ENCODE measurements at regions of chr21 and their contacts with region 1.

Region 1: GRCh38 chr21:26842976-26843932 is 2.0 kb downstream of the ADAMTS1 start:
- DNase-seq: peak; percentile 94
- H3K4me3 ChIP-seq: peak overlapping the region; percentile 38 to 77 (median 64)
- H3K27ac ChIP-seq: peak overlapping the region; percentile 80
- H3K4me1 ChIP-seq: peaks cover 35% of the 10 kb centered on the region
- H3K27me3 ChIP-seq: peaks cover 5 to 16% of the 10 kb centered on the region in 2 experiments
- CTCF ChIP-seq: peak; percentile 12 to 34
- POLR2A ChIP-seq: no peak

Region 2: DNA sequence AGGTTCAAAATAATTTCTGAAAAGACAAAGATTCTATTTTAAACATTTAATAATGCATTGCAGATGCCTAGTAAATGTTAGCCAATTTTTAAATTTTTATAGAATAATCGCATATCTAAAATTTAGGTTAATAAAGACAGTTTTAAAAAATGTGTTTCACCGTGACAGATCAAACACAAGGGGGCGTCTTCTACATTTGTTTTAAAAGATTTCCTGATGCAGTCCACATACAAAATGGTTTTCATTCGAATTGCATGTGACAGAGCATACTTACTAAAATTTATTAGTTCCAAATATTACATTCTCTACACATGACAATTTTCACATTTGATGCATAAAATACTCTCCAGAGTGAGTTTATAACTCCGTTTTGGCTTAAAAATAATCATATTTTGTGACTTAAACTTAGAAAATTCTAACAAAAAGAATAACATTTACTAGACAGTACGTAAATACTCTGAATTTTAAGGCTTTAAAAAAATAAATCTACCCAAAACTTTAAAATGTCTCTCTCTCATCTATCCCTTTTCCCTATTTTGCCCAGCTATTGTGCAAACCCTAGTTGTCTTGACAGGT is 73.6 kb before region 1 on chr21:
- CTCF ChIA-PET with region 1: interaction called, 3 read pairs
- POLR2A ChIA-PET with region 1: no interaction called
- dilution Hi-C with region 1: no loop called
- intact Hi-C with region 1: loop called (anchors 2 kb)
- DNase-seq: peak; percentile 43
- H3K4me3 ChIP-seq: no peak overlapping the region
- H3K27ac ChIP-seq: no peak overlapping the region
- H3K4me1 ChIP-seq: no peaks in the 10 kb centered on the region
- H3K27me3 ChIP-seq: peaks cover 0 to 2% of the 10 kb centered on the region in 2 experiments
- CTCF ChIP-seq: peak; percentile 24 to 42
- POLR2A ChIP-seq: no peak

Region 3: DNA sequence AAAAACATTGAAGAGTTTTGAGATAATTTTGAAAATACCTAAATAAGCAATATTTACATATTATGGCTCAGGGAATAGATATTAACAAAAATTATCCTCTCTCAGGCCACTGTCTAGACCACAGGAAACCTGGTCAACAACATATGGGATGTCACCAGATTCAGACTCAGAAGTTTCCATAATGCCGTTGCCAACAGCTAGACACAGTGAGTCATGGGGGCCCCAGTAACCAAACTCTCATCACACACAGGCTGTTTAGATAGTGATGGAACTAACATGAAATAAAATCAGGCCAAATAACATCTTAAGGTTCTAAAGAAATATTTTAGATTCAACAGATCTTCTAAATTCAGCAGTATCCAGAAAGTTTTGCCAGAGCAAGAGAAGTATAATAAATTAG is 805.3 kb after region 1 on chr21:
- CTCF ChIA-PET with region 1: no interaction called
- POLR2A ChIA-PET with region 1: no interaction called
- dilution Hi-C with region 1: no loop called
- intact Hi-C with region 1: loop called (anchors 1 kb)
- DNase-seq: peak; percentile 91
- H3K4me3 ChIP-seq: no peak overlapping the region
- H3K27ac ChIP-seq: peak overlapping the region; percentile 91
- H3K4me1 ChIP-seq: peaks cover 34% of the 10 kb centered on the region
- H3K27me3 ChIP-seq: no peaks in the 10 kb centered on the region
- CTCF ChIP-seq: no peak
- POLR2A ChIP-seq: no peak

Region 4: DNA sequence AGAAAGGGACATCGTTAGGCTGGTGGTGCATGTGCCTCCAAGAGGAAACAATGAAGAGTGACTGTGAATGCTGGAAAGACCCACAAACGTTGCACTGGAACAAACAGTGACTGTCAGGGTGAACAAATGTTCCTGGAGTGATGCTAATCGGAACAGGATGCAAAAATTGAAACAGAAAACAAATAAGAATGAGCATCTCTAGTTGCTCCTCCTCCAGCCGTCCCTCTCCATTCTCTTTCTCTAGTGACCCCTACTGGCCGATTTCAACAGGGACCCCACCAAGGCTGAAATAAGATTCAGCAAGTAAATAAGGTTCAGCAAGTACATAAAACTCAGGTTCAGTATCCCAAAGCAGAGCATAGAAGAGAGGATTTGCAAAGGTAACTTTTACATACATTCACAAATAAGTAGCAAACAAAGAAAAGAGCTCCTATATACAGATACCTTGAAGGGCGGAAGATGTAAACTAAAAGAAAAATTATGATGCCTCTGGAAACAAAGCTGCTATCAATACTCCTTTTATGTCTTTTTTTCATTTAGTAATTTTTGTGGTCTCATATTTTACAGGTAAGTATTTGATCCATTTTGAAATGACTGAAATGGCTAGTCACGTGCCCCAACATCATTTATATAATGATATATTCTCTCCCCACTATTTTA is 959.7 kb after region 1 on chr21:
- CTCF ChIA-PET with region 1: no interaction called
- POLR2A ChIA-PET with region 1: no interaction called
- dilution Hi-C with region 1: no loop called
- intact Hi-C with region 1: loop called (anchors 5 kb)
- DNase-seq: peak; percentile 39
- H3K4me3 ChIP-seq: no peak overlapping the region
- H3K27ac ChIP-seq: no peak overlapping the region
- H3K4me1 ChIP-seq: no peaks in the 10 kb centered on the region
- H3K27me3 ChIP-seq: no peaks in the 10 kb centered on the region
- CTCF ChIP-seq: peak; percentile 55 to 65
- POLR2A ChIP-seq: no peak

Region 5: DNA sequence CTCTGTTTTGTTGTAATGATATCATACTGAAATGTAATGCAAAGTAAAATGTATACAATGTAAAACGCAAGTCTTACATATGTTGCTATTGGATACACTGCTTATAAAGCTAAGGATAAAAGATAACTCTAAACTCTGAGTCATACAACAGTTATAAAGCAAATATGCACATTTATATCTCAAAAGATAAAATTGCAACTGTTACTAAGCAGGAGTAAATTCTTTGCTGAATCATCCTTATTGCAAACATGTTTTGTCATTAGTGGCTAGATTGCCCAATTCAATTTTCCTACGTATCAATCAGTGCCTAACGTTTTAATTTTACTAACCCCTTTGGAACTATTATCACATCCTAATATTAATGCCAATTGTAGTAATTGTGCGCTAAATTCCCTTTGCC is 1386.6 kb after region 1 on chr21:
- CTCF ChIA-PET with region 1: no interaction called
- POLR2A ChIA-PET with region 1: no interaction called
- dilution Hi-C with region 1: no loop called
- intact Hi-C with region 1: loop called (anchors 1 kb)
- DNase-seq: peak; percentile 37
- H3K4me3 ChIP-seq: no peak overlapping the region
- H3K27ac ChIP-seq: peak overlapping the region; percentile 55
- H3K4me1 ChIP-seq: peaks cover 18% of the 10 kb centered on the region
- H3K27me3 ChIP-seq: no peaks in the 10 kb centered on the region
- CTCF ChIP-seq: no peak
- POLR2A ChIP-seq: no peak

Region 6: GRCh38 chr21:28522014-28522799 is 1679.0 kb after region 1 on chr21:
- CTCF ChIA-PET with region 1: interaction called, 3 read pairs
- POLR2A ChIA-PET with region 1: no interaction called
- dilution Hi-C with region 1: no loop called
- intact Hi-C with region 1: loop called (anchors 1 kb)
- DNase-seq: peak; percentile 88
- H3K4me3 ChIP-seq: no peak overlapping the region
- H3K27ac ChIP-seq: peak overlapping the region; percentile 72
- H3K4me1 ChIP-seq: peaks cover 45% of the 10 kb centered on the region
- H3K27me3 ChIP-seq: no peaks in the 10 kb centered on the region
- CTCF ChIP-seq: peak; percentile 44 to 56
- POLR2A ChIP-seq: no peak

Region 7: GRCh38 chr21:28633839-28634555 is 1790.7 kb after region 1 on chr21:
- CTCF ChIA-PET with region 1: no interaction called
- POLR2A ChIA-PET with region 1: no interaction called
- dilution Hi-C with region 1: no loop called
- intact Hi-C with region 1: loop called (anchors 1 kb)
- DNase-seq: peak; percentile 94
- H3K4me3 ChIP-seq: peak overlapping the region in 1 of 3 experiments; percentile 1
- H3K27ac ChIP-seq: peak overlapping the region; percentile 97
- H3K4me1 ChIP-seq: peaks cover 59% of the 10 kb centered on the region
- H3K27me3 ChIP-seq: no peaks in the 10 kb centered on the region
- CTCF ChIP-seq: no peak
- POLR2A ChIP-seq: peak; percentile 12

Measured in endothelial cell of umbilical vein (primary cell).